BJ (cell line): ENCODE measurements at regions of chr10 and their contacts with region 1.

Region 1: GRCh38 chr10:88835096-88835909 is 16.3 kb downstream of the ANKRD22 start:
- DNase-seq: peak; percentile 41
- H3K4me3 ChIP-seq: no peak overlapping the region
- H3K27me3 ChIP-seq: no peaks in the 10 kb centered on the region
- CTCF ChIP-seq: peak; percentile 84

Region 2: GRCh38 chr10:88820748-88821389 is 14.4 kb before region 1 on chr10:
- CTCF ChIA-PET with region 1: interaction called, 36 read pairs
- POLR2A ChIA-PET with region 1: no interaction called
- DNase-seq: peak; percentile 77
- H3K4me3 ChIP-seq: no peak overlapping the region
- H3K27me3 ChIP-seq: no peaks in the 10 kb centered on the region
- CTCF ChIP-seq: no peak

Region 3: GRCh38 chr10:88854684-88855083 is 19.4 kb after region 1 on chr10:
- CTCF ChIA-PET with region 1: interaction called, 16 read pairs
- POLR2A ChIA-PET with region 1: no interaction called
- DNase-seq: no peak
- H3K4me3 ChIP-seq: no peak overlapping the region
- H3K27me3 ChIP-seq: no peaks in the 10 kb centered on the region
- CTCF ChIP-seq: no peak

Region 4: GRCh38 chr10:88880282-88881076 is 45.2 kb after region 1 on chr10:
- CTCF ChIA-PET with region 1: interaction called, 14 read pairs
- POLR2A ChIA-PET with region 1: no interaction called
- DNase-seq: no peak
- H3K4me3 ChIP-seq: peak overlapping the region; percentile 85
- H3K27me3 ChIP-seq: no peaks in the 10 kb centered on the region
- CTCF ChIP-seq: peak; percentile 46

Region 5: GRCh38 chr10:88990384-88991160 is 155.3 kb after region 1 on chr10 and contains the start of gene FAS:
- CTCF ChIA-PET with region 1: interaction called, 19 read pairs
- POLR2A ChIA-PET with region 1: no interaction called
- DNase-seq: no peak
- H3K4me3 ChIP-seq: peak within 1 kb of the TSS; percentile 75
- H3K27me3 ChIP-seq: no peaks in the 10 kb centered on the region
- CTCF ChIP-seq: no peak
- polyA plus RNA-seq, gene FAS: 52.3 and 83.2 TPM in 2 replicates